ENCODE measurements at regions of chr11 and their contacts with region 1.

Region 1: DNA sequence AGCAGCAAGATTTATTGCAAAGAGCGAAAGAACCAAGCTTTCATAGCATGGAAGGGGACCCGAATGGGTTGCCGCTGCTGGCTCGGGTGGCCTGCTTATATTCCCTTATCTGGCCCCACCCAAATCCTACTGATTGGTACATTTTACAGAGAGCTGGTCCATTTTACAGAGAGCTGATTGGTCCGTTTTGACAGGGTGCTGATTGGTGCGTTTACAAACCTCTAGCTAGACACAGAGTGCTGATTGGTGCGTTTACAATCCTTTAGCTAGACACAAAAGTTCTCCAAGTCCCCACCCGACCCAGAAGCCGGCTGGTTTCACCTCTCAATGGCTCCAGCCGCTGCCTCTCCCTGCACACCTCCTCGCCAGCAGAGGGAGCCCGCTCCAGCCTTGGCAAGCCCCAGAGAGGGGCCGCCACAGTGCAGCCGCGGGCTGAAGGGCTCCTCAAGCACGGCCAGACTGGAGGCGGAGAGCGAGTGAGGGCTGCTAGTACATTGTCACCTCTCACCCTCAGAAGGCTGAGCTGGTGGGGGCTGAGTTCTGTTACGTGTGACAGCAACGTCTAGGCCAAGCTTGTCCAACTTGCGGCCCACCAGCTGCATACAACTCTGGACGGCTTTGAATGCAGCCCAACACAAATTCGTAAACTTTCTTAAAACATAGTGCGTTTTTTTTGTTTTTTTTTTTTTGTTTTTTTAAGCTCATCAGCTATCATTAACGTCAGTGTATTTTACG is 8.7 kb downstream of the PTH start:
- DNase-seq: peak; percentile 88
- ATAC-seq: peak; percentile 98
- H3K4me3 Mint-ChIP-seq: peak overlapping the region; percentile 44
- H3K27ac Mint-ChIP-seq: no peak overlapping the region
- H3K4me1 Mint-ChIP-seq: 0 out of 2 replicates have a peak, but pooled peaks cover 3% of the 10 kb centered on the region
- H3K27me3 Mint-ChIP-seq: peaks cover 15% of the 10 kb centered on the region
- CTCF ChIP-seq: peak; percentile 50

Region 2: GRCh38 chr11:13440100-13440855 is 46.8 kb before region 1 on chr11:
- CTCF ChIA-PET with region 1: no interaction called
- POLR2A ChIA-PET with region 1: no interaction called
- DNase-seq: no peak
- ATAC-seq: peak; percentile 93
- H3K4me3 Mint-ChIP-seq: peak overlapping the region; percentile 54
- H3K27ac Mint-ChIP-seq: peak overlapping the region; percentile 58; the same call in 1 of the 2 replicates
- H3K4me1 Mint-ChIP-seq: peaks cover 37% of the 10 kb centered on the region
- H3K27me3 Mint-ChIP-seq: no peaks in the 10 kb centered on the region
- CTCF ChIP-seq: no peak

Region 3: DNA sequence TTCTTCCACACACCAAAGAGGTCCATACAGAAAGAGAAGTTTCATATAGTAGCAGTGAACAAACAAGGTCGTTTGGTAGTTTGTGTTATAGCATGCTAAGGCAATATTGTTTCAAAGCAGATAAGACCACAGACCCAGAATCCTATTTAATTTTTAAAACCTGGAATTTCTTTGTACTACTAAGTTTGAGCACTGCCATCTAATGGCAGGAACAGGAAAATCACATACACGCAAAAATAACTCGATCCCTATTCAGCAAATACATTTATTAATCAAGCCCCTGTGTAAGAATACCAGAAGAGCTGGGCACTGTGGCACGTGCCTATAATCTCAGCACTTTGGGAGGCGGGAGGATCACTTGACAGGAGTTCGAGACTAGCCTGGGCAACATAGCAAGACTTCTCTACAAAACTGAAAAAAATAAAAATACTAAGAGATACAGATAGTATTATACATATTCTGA is 21.2 kb before region 1 on chr11:
- CTCF ChIA-PET with region 1: interaction called, 19 read pairs
- POLR2A ChIA-PET with region 1: no interaction called
- DNase-seq: no peak
- ATAC-seq: no peak
- H3K4me3 Mint-ChIP-seq: no peak overlapping the region
- H3K27ac Mint-ChIP-seq: no peak overlapping the region
- H3K4me1 Mint-ChIP-seq: peaks cover 24% of the 10 kb centered on the region
- H3K27me3 Mint-ChIP-seq: no peaks in the 10 kb centered on the region; the same call in none of the 2 replicates
- CTCF ChIP-seq: no peak

Region 4: DNA sequence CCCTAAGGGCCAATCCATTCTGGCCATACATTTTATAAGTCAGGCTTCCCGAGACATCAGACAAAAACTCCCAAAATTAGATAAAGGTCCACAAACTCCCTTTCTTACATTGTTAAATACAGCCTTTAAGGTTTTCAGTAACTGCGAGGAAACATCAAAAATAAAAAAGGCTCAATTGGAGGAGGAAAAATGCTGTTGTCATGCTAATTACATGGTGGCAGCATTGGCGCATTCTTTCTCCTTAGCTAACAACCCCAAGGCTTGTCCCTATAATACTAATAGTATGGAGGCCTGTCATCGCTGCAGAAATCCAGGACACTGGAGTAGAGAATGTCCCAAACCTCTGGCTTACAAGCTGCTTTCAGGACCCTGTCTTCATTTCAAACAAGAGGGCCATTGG is 15.1 kb before region 1 on chr11:
- CTCF ChIA-PET with region 1: interaction called, 21 read pairs
- POLR2A ChIA-PET with region 1: no interaction called
- DNase-seq: no peak
- ATAC-seq: 0 out of 2 replicates have a peak, but pooled peaks have one; percentile 20
- H3K4me3 Mint-ChIP-seq: no peak overlapping the region
- H3K27ac Mint-ChIP-seq: no peak overlapping the region
- H3K4me1 Mint-ChIP-seq: peaks cover 18% of the 10 kb centered on the region
- H3K27me3 Mint-ChIP-seq: no peaks in the 10 kb centered on the region
- CTCF ChIP-seq: no peak

Region 5: DNA sequence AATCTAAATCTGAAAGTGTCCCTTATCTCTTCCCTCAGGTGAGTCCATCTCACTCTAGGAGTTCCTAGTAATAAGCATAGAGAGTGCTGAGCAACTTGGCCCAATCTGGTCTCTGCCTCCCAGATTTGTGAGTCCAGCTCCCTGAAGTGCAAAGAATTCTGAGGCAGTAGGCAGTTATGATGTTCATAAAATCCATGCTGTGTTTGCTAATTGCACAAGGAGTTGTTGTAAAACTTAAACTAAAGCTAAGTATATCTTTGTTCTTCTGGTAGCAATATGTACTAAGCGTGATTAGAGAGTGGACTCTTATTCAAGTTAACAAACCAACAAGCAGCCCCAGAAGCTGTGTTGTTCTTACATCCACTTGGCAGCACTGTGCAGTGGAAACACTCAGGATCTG is 16.3 kb after region 1 on chr11:
- CTCF ChIA-PET with region 1: interaction called, 14 read pairs
- POLR2A ChIA-PET with region 1: no interaction called
- DNase-seq: no peak
- ATAC-seq: no peak
- H3K4me3 Mint-ChIP-seq: no peak overlapping the region
- H3K27ac Mint-ChIP-seq: no peak overlapping the region
- H3K4me1 Mint-ChIP-seq: no peaks in the 10 kb centered on the region
- H3K27me3 Mint-ChIP-seq: no peaks in the 10 kb centered on the region
- CTCF ChIP-seq: no peak

Region 6: GRCh38 chr11:13535819-13536218 is 48.7 kb after region 1 on chr11:
- CTCF ChIA-PET with region 1: interaction called, 16 read pairs
- POLR2A ChIA-PET with region 1: no interaction called
- DNase-seq: no peak
- ATAC-seq: peak; percentile 80
- H3K4me3 Mint-ChIP-seq: no peak overlapping the region
- H3K27ac Mint-ChIP-seq: no peak overlapping the region
- H3K4me1 Mint-ChIP-seq: no peaks in the 10 kb centered on the region
- H3K27me3 Mint-ChIP-seq: peaks cover 19% of the 10 kb centered on the region
- CTCF ChIP-seq: peak; percentile 33; the same call in 1 of the 2 replicates

Region 7: GRCh38 chr11:13759050-13759449 is 272.0 kb after region 1 on chr11:
- CTCF ChIA-PET with region 1: interaction called, 10 read pairs
- POLR2A ChIA-PET with region 1: no interaction called
- DNase-seq: no peak
- ATAC-seq: peak; percentile 34; the same call in 1 of the 2 replicates
- H3K4me3 Mint-ChIP-seq: no peak overlapping the region
- H3K27ac Mint-ChIP-seq: no peak overlapping the region
- H3K4me1 Mint-ChIP-seq: peaks cover 11% of the 10 kb centered on the region
- H3K27me3 Mint-ChIP-seq: no peaks in the 10 kb centered on the region
- CTCF ChIP-seq: no peak